GM10248 (cell line): ENCODE measurements at regions of chr2 and their contacts with region 1.

Region 1: GRCh38 chr2:151422917-151423439 is 13.3 kb downstream of the RIF1 start:
- DNase-seq: peak; percentile 40
- CTCF ChIP-seq: no peak

Region 2: DNA sequence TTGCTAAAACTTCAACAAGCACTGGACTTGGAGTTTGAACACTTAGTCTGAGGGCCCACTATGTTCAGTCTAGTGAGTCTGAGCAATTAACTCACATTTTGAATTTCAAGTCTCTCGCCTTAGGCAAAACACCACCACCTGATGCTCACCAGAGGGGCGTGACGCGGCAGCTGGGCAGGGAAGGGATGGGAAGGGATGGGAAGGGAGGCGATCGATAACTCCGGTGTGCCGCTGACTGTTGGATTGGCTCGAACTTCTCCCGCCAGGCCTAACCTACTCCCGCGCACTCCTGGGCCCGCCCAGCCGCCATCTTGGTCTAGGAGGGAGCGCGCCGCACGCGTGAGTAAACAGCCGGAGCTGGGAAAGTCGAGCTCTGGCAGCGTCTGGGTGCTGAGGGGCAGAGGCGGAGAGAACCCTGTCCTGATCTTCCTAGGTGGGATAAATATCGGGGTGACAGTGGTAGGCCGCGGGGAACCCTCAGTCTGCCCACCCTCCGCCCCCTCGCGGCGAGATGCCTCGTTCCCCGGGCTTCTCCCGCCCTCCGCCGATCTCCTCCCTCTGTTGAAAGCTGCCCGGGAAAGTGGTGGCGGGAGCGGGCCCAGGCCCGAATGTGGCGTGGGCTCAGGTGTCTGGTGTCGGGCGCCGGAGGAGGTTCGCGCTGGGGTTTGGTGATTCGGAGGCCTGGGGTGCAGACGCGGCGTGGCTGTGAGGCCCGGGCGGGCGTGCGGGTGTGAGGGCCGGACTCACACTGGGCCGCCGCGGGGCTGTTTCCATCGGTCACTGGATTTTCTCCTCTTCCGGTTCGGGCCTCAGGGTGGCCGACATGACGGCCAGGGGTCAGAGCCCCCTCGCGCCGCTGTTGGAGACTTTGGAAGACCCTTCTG is 13.1 kb before region 1 on chr2 and contains the start of gene RIF1:
- CTCF ChIA-PET with region 1: interaction called, 12 read pairs
- POLR2A ChIA-PET with region 1: interaction called, 4 read pairs
- DNase-seq: peak; percentile 90
- CTCF ChIP-seq: peak; percentile 43

Region 3: GRCh38 chr2:151437630-151438029 is 14.7 kb after region 1 on chr2:
- CTCF ChIA-PET with region 1: interaction called, 49 read pairs
- POLR2A ChIA-PET with region 1: no interaction called
- DNase-seq: peak; percentile 28
- CTCF ChIP-seq: peak; percentile 46